MCF 10A (cell line): ENCODE measurements at regions of chr2 and their contacts with region 1.

Region 1: DNA sequence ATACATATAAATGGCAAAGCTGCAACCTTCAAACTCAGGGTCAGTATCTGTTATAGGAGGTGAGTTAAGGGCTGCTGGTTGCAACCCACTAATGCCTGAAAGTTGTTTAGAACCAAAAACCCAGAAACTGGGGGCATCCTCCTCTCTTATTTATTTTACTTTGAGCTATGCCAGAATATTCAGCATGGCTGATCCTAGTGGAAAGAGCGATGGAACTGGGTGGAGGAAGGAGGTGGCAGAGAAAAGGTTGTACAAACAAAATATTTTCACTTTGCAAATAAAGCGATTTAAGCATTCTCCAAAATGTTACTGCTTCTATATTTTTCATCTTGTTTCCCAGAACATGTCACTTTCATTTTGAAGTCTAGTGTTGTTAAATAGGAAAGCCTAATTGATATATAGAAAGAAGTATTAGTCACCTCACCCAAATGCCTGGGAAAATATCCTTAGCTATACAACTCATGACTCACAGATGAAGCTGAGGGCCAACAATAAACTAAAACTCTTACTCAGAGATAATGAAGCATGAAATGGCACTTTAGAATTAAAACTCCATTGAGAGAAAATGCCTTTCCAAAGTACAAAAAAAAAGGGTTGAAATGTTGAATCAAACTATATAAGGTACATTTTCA is 251.4 kb upstream of the UBE2E3 start:
- DNase-seq: peak; percentile 87
- H3K4me3 Mint-ChIP-seq: no peak overlapping the region
- H3K27ac Mint-ChIP-seq: no peak overlapping the region
- H3K4me1 Mint-ChIP-seq: peaks cover 37% of the 10 kb centered on the region
- H3K27me3 Mint-ChIP-seq: no peaks in the 10 kb centered on the region
- CTCF ChIP-seq: no peak

Region 2: DNA sequence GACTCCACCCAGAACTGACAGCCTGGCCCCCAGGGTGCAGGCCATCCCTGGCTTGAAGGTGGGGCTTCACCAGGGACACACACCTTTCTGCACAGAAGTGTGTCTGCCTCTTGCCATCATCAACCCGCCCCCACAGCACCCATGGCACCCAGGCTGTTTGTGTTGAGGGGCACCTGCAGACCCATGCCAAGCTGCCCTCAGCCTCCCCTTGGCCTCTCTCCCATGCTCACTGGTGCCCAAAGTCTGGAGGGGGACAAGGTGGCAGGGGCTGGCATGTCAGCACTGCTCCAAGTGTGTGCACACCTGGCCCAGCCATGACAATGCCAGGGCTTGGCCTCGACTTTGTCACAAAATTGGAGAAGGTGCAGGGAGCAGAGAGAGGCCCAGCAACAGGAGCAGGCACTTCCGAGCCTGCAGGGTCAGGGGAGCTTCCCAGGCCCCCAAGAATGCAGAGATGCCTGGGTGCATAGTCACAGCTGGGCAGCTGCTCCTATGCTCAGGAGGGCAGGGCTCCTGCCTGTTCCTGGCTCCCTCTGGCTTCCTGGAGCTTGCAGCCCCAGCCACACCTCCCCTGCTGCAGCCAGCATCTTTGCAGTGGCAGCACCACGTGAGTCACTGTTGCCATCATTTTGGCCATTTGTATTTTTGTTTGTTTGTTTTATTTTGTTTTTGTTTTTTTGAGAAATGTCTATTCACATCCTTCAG is 29.2 kb before region 1 on chr2:
- CTCF ChIA-PET with region 1: no interaction called
- POLR2A ChIA-PET with region 1: no interaction called
- intact Hi-C with region 1: no loop called
- DNase-seq: no peak
- H3K4me3 Mint-ChIP-seq: no peak overlapping the region
- H3K27ac Mint-ChIP-seq: no peak overlapping the region
- H3K4me1 Mint-ChIP-seq: peaks cover 5% of the 10 kb centered on the region
- H3K27me3 Mint-ChIP-seq: no peaks in the 10 kb centered on the region
- CTCF ChIP-seq: no peak

Region 3: DNA sequence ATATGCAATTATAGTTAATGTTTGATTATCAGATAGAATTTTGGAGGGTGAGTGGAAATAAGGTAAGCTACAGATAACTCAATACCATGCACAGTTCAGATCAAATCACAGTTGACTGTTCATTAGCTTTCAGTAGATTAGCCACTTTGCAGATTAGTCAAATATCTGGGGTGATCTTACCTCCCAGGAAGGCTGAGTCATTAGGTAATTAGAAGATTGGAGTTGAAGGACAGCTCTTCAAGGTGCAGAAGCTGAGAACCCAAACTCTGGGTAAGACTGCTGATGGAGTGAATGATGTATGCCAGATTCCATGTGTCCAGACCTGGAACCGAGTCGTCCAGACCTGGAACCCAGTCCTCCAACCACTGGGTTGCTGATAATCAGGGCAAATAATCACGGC is 11.5 kb before region 1 on chr2:
- CTCF ChIA-PET with region 1: interaction called, 3 read pairs
- POLR2A ChIA-PET with region 1: interaction called, 11 read pairs
- intact Hi-C with region 1: no loop called
- DNase-seq: no peak
- H3K4me3 Mint-ChIP-seq: no peak overlapping the region
- H3K27ac Mint-ChIP-seq: no peak overlapping the region
- H3K4me1 Mint-ChIP-seq: peaks cover 8% of the 10 kb centered on the region
- H3K27me3 Mint-ChIP-seq: no peaks in the 10 kb centered on the region
- CTCF ChIP-seq: no peak